CD8-positive, alpha-beta memory T cell (primary cell): ENCODE measurements at regions of chr2 and their contacts with region 1.

Region 1: DNA sequence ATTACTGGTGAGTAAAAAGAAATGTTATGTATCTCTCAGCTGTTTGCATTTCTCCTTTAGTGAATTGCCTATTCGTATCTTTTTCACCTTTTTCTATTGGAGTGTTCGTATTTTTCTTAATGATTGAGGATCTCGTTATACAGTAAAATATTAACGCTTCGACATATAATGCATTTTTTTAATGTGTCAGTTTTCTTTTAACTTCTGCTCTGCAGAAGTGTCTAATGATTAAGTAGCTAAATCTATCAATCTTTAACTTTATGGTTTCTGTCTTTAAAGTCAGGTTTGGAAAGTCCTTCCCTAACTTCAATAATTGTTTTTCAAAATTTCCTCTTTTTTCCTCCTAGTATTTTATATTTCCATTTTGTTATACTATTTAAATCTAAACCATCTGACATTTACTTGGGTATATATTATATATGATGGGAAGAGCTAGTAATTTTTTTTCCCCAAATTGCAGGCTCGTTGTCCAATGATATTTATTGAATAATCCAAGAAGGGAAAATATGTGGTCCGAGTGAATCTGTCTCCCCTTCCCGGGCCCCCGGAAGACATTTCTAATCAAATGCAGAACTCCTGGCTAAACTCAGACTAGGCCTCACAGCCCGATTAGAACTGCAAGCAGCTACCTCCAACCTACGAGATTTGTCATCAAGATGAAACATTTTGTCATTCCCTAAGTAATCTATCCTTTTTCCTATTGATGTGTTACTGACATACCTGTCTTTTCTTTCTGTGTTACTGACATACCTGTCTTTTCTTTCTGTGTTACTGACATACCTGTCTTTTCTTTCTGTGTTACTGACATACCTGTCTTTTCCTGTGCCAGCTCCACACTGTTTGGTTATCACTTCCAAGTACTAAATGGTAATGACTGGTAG is 17.2 kb downstream of the PCBP1 start:
- DNase-seq: peak in 1 of 5 donors; percentile 50
- H3K4me3 ChIP-seq: peak overlapping the region; percentile 42
- H3K4me3 Mint-ChIP-seq: peak overlapping the region; percentile 79 to 89 (median 80)
- H3K27ac ChIP-seq: peak overlapping the region; percentile 52
- H3K27ac Mint-ChIP-seq: peak overlapping the region; percentile 94 to 97 (median 96)
- H3K4me1 ChIP-seq: peaks cover 42% of the 10 kb centered on the region
- H3K4me1 Mint-ChIP-seq: peaks cover 41 to 58% (median 55%) of the 10 kb centered on the region in 3 donors
- H3K27me3 ChIP-seq: no peaks in the 10 kb centered on the region
- H3K27me3 Mint-ChIP-seq: no peaks in the 10 kb centered on the region

Region 2: DNA sequence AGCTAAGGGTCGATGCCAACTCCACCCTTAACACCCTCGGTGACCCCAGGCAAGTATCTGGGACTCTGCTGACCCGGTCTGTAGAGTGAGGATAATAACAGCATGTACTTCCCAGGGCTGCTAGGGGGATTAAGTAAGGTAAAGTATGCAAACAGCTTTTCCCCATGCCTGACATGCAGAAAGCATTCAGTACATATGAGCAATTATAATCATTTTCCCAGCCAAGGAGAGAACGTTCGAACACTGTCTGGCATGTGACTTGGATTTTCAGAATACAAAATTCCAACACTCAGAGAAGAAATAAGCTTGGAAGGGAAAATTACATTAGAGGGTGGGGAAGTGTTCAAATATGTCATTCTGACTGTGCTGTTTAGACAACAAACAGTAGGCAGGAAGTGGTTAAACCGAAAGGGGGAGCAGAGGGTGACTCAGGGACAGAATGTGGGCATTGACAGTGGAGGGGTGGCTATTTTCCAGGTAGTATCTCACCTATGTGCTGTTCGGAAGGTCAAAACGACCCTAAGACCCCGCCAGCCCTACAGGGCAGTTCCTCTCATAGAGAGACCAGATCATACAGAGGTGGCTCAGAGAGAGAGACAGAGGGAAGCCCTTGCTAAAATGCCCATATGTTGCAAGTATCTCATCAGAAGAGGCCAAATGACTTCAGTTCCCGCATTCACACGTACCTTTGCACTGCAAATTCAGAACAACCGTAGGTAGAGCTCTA is 158.0 kb before region 1 on chr2:
- CTCF ChIA-PET with region 1: no interaction called
- POLR2A ChIA-PET with region 1: no interaction called
- DNase-seq: peak; percentile 25 to 74 (median 46)
- H3K4me3 ChIP-seq: no peak overlapping the region
- H3K4me3 Mint-ChIP-seq: peak overlapping the region in 6 of 7 donors; percentile 46 to 81 (median 76)
- H3K27ac ChIP-seq: peak overlapping the region; percentile 40
- H3K27ac Mint-ChIP-seq: peak overlapping the region; percentile 73 to 96 (median 92)
- H3K4me1 ChIP-seq: peaks cover 25% of the 10 kb centered on the region
- H3K4me1 Mint-ChIP-seq: peaks cover 26 to 28% (median 26%) of the 10 kb centered on the region in 3 donors
- H3K27me3 ChIP-seq: no peaks in the 10 kb centered on the region
- H3K27me3 Mint-ChIP-seq: no peaks in the 10 kb centered on the region

Region 3: GRCh38 chr2:70124983-70125480 is 20.6 kb after region 1 on chr2:
- CTCF ChIA-PET with region 1: interaction called, 52 read pairs
- POLR2A ChIA-PET with region 1: interaction called, 80 read pairs
- DNase-seq: peak in 4 of 5 donors; percentile 45 to 79 (median 62)
- H3K4me3 ChIP-seq: peak overlapping the region; percentile 84
- H3K4me3 Mint-ChIP-seq: peak overlapping the region; percentile 86 to 98 (median 95)
- H3K27ac ChIP-seq: peak overlapping the region; percentile 90
- H3K27ac Mint-ChIP-seq: peak overlapping the region; percentile 98 to 100 (median 100)
- H3K4me1 ChIP-seq: peaks cover 63% of the 10 kb centered on the region
- H3K4me1 Mint-ChIP-seq: peaks cover 61 to 82% (median 81%) of the 10 kb centered on the region in 3 donors
- H3K27me3 ChIP-seq: no peaks in the 10 kb centered on the region
- H3K27me3 Mint-ChIP-seq: peaks cover 0 to 6% of the 10 kb centered on the region in 2 donors

Region 4: DNA sequence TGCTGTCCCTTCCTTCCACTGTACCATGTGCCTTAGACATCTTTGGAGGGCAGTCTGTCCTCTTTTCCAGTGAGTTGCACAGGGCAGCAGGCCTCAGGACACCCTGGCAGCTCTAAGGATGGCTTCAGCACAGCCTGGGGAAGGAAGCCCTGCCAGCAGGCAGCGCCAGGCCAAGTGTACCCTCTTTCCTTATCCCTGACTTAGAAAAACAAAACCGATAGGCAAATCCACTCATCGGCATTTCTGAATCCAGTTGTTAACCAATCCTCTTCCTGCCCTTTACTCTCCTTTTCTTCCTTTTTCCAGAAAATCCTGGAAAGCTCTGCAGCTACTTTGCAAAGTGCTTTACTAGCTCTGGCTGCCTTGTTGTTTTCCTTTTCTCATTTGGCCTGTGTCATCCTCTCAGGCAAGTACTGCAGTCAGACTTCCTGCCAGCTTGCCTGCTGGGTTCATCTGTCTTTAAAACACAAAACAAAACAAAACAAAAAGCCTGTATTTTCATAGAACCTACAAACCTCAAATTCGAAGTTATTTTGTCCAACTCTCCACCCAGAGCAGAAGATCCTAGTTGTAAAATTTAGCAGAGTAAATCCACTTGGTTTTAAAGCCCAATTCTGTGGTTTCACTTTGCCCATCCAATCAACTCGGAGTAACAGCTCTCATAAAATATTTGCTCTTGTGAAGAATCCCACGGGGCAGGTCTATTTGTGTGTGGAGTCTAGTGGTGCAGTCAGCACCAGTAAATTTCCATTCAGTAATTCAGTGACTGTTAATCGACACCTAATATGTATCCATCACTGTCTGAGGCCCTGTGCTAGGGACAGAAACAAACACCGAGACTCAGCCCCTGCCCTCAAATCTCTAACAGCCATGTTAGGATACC is 28.0 kb after region 1 on chr2:
- CTCF ChIA-PET with region 1: interaction called, 14 read pairs
- POLR2A ChIA-PET with region 1: interaction called, 39 read pairs
- DNase-seq: peak in 4 of 5 donors; percentile 19 to 72 (median 56)
- H3K4me3 ChIP-seq: peak overlapping the region; percentile 57
- H3K4me3 Mint-ChIP-seq: peak overlapping the region; percentile 75 to 91 (median 84)
- H3K27ac ChIP-seq: peak overlapping the region; percentile 79
- H3K27ac Mint-ChIP-seq: peak overlapping the region; percentile 94 to 99 (median 96)
- H3K4me1 ChIP-seq: peaks cover 86% of the 10 kb centered on the region
- H3K4me1 Mint-ChIP-seq: peaks cover 66 to 86% (median 85%) of the 10 kb centered on the region in 3 donors
- H3K27me3 ChIP-seq: no peaks in the 10 kb centered on the region
- H3K27me3 Mint-ChIP-seq: no peaks in the 10 kb centered on the region